A673 (cell line): ENCODE measurements at regions of chr12 and their contacts with region 1.

Region 1: GRCh38 chr12:130715998-130716968 is at the start of gene RIMBP2:
- DNase-seq: peak; percentile 60
- H3K4me3 ChIP-seq: peak within 1 kb of the TSS; percentile 47
- H3K27ac ChIP-seq: no peak within 1 kb of the TSS
- H3K4me1 ChIP-seq: peaks cover 16% of the 10 kb centered on the region
- H3K27me3 ChIP-seq: peaks cover 58% of the 10 kb centered on the region
- CTCF ChIP-seq: no peak
- total RNA-seq, gene RIMBP2: 0.95 and 1.0 TPM in 2 replicates

Region 2: DNA sequence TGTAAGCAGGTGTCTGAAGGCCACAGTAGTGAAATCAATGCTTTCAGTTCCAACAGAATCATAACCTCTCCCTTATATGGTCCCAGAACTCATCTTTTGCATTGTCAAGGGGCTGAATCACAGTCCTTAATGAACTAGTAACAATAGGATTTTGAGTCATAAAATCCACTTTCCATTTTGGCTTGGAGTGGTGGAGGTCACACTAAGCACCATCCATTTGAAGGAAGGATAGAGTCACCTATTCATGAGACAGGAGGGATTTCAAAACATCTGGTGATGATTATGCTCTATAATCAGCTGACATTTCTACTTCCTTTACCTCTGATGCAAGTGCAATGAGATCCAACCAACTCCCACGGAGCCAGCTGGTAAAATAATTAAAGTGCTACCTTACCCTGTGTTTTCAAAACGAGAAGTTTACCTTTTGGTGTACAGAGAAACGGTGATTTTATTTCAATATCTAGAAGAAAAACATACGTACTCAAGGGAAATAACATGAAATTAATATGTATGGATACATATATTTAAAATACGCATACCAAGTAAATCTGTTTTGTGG is 871.5 kb before region 1 on chr12:
- CTCF ChIA-PET with region 1: no interaction called
- POLR2A ChIA-PET with region 1: no interaction called
- intact Hi-C with region 1: no loop called
- DNase-seq: no peak
- H3K4me3 ChIP-seq: no peak overlapping the region
- H3K27ac ChIP-seq: no peak overlapping the region
- H3K4me1 ChIP-seq: no peaks in the 10 kb centered on the region
- H3K27me3 ChIP-seq: no peaks in the 10 kb centered on the region
- CTCF ChIP-seq: no peak

Region 3: DNA sequence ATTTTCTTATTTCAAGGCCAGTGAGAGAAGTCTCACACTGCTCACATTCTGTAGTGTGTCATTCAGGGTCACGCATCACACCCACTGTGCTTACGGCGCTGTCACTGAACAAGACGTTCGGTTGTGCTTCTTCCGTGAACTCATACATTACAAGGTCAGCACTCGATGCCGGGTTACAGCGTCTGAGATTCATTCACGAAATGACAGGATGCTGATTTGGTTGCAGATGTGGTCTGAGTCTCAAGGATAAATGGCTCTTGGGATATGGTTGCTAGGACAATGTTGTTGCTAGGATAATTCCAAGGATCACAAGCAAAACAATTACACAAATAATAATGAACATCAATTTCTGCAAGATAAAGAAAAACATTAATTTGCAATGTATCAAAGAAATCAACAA is 75.3 kb after region 1 on chr12:
- CTCF ChIA-PET with region 1: no interaction called
- POLR2A ChIA-PET with region 1: interaction called, 12 read pairs
- intact Hi-C with region 1: no loop called
- DNase-seq: no peak
- H3K4me3 ChIP-seq: no peak overlapping the region
- H3K27ac ChIP-seq: no peak overlapping the region
- H3K4me1 ChIP-seq: no peaks in the 10 kb centered on the region
- H3K27me3 ChIP-seq: no peaks in the 10 kb centered on the region
- CTCF ChIP-seq: no peak